ENCODE measurements at regions of chr6 and their contacts with region 1.

Region 1: DNA sequence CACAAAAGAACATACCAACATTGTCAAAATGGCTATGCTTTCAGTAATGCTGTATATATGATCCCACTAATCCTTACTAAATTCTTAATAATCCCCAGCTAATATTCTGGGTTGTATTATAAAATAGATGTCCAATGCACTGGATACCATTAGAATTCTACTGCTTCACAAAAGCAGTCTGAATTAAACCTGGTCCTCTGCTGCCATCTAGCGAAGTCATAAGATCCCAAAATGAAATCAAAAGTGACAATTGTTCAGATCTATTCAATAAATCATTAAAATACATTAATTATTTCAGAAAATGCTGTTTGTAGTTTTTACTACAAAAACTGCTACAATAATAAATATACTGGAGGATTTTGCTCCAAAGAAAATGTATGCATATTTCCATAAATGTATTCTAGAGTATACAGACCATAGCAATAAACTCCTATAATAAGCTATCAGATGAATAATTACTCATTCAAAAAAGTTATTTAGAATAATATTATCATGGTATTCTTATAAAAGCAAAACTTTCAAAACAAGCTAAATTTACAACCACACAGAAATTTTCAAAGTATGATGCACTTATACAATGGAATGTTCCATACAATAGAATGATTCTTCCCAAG is 92.6 kb downstream of the RNGTT start:
- DNase-seq: peak; percentile 72
- ATAC-seq: no peak
- H3K4me3 ChIP-seq: no peak overlapping the region
- H3K4me3 Mint-ChIP-seq: no peak overlapping the region
- H3K27ac ChIP-seq: no peak overlapping the region
- H3K27ac Mint-ChIP-seq: no peak overlapping the region
- H3K4me1 ChIP-seq: peaks cover 0 to 4% of the 10 kb centered on the region in 2 donors
- H3K4me1 Mint-ChIP-seq: peaks cover 5% of the 10 kb centered on the region
- H3K27me3 ChIP-seq: no peaks in the 10 kb centered on the region
- H3K27me3 Mint-ChIP-seq: no peaks in the 10 kb centered on the region
- CTCF ChIP-seq: peak; percentile 94

Region 2: DNA sequence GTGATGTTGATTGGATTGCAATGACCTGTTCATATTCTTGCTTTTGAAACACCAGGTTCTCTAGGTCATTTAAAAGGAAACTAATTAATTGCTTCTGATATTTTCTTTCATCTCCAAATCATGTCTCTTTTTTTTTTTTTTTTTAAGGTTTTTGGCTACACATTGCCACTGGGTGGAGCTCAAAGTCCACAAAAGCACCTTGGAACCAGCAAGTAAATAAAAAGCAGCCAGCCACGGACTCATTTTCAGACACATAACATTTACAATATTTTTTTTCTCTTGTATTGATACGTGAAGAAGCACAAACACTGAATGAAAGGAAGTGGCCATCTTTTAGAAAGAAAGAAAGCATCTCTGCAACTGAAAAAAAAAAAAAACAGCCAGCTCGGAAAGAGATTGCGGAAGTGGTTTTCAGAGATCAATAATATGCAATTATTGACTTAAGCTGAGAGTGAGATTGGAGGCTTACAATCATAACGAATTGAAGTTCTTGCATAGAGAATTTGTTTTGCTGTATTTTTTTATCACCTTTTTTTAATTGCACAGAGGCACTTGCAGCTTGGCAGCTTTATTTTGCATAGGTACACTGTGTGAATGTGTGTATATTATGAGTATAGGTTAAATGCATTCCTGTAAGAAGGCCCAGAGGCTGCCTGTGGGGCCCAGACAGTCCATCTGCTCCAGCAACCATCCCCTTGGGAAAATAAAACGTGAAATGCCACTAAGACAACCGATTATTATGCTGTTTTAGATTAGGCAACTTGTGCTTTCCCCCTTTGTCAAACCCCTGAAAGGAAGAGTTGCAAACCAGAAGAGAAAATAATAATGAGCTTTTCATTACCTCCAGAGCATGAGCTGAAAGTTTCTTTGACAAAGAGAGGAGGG is 1804.1 kb before region 1 on chr6:
- CTCF ChIA-PET with region 1: interaction called, 32 read pairs
- POLR2A ChIA-PET with region 1: no interaction called
- intact Hi-C with region 1: loop called (anchors 1 kb)
- DNase-seq: peak; percentile 67
- ATAC-seq: no peak
- H3K4me3 ChIP-seq: peak overlapping the region in 2 of 5 experiments; percentile 29 to 33
- H3K4me3 Mint-ChIP-seq: peak overlapping the region; percentile 44
- H3K27ac ChIP-seq: no peak overlapping the region
- H3K27ac Mint-ChIP-seq: no peak overlapping the region
- H3K4me1 ChIP-seq: no peaks in the 10 kb centered on the region
- H3K4me1 Mint-ChIP-seq: peaks cover 5% of the 10 kb centered on the region
- H3K27me3 ChIP-seq: no peaks in the 10 kb centered on the region
- H3K27me3 Mint-ChIP-seq: no peaks in the 10 kb centered on the region
- CTCF ChIP-seq: peak; percentile 78

Region 3: GRCh38 chr6:87237804-87238203 is 1633.0 kb before region 1 on chr6:
- CTCF ChIA-PET with region 1: no interaction called
- POLR2A ChIA-PET with region 1: no interaction called
- intact Hi-C with region 1: loop called (anchors 10 kb)
- DNase-seq: peak; percentile 39
- ATAC-seq: peak; percentile 49
- H3K4me3 ChIP-seq: no peak overlapping the region
- H3K4me3 Mint-ChIP-seq: no peak overlapping the region
- H3K27ac ChIP-seq: no peak overlapping the region
- H3K27ac Mint-ChIP-seq: no peak overlapping the region
- H3K4me1 ChIP-seq: no peaks in the 10 kb centered on the region
- H3K4me1 Mint-ChIP-seq: peaks cover 3% of the 10 kb centered on the region
- H3K27me3 ChIP-seq: no peaks in the 10 kb centered on the region
- H3K27me3 Mint-ChIP-seq: no peaks in the 10 kb centered on the region
- CTCF ChIP-seq: peak; percentile 52

Region 4: GRCh38 chr6:87393022-87393622 is 1477.7 kb before region 1 on chr6:
- CTCF ChIA-PET with region 1: interaction called, 46 read pairs
- POLR2A ChIA-PET with region 1: no interaction called
- intact Hi-C with region 1: loop called (anchors 1 kb)
- DNase-seq: peak; percentile 79
- ATAC-seq: peak; percentile 86
- H3K4me3 ChIP-seq: no peak overlapping the region
- H3K4me3 Mint-ChIP-seq: no peak overlapping the region
- H3K27ac ChIP-seq: no peak overlapping the region
- H3K27ac Mint-ChIP-seq: no peak overlapping the region
- H3K4me1 ChIP-seq: no peaks in the 10 kb centered on the region
- H3K4me1 Mint-ChIP-seq: peaks cover 5% of the 10 kb centered on the region
- H3K27me3 ChIP-seq: no peaks in the 10 kb centered on the region
- H3K27me3 Mint-ChIP-seq: no peaks in the 10 kb centered on the region
- CTCF ChIP-seq: peak; percentile 84

Region 5: DNA sequence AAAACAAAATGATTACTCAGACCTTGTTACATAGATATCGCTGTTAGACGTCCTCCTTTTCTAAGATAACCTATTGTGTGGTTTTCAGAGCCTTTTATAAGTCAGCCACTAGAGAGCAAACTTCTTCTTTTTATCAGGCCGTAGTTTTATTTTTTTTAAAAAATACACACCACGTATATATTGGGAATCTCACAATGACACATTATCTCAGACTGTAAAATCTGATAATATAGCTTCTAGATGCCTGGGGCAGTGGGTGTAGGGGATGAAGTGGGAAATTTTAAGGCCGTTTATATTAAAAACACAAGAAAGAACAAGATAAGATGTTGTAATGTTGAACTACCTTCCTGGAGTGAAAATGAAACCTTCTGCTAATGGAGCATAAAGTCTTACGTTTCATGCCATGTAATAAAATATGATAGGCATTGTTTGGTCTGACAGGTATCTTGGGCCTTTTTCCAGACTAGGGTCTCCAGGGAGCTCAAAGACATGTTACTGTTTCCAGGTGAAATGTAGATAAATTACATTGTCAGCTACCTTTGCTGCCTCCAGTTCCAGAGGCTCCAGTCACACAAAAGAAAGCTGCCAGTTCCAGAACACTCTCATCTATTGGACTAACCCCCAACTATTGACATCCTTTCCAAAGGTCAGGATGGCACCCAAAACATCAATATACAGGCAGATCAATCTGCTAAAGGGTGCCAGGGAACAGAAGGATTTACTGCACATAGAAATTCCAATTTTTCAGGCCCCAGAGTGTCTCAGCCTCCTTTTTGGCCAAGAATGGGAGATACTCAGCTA is 1038.6 kb before region 1 on chr6:
- CTCF ChIA-PET with region 1: interaction called, 29 read pairs
- POLR2A ChIA-PET with region 1: no interaction called
- intact Hi-C with region 1: loop called (anchors 1 kb)
- DNase-seq: peak; percentile 73
- ATAC-seq: peak; percentile 74
- H3K4me3 ChIP-seq: peak overlapping the region; percentile 42 to 81 (median 64)
- H3K4me3 Mint-ChIP-seq: peak overlapping the region; percentile 89
- H3K27ac ChIP-seq: peak overlapping the region; percentile 74 to 89
- H3K27ac Mint-ChIP-seq: peak overlapping the region; percentile 78
- H3K4me1 ChIP-seq: peaks cover 6 to 7% of the 10 kb centered on the region in 2 donors
- H3K4me1 Mint-ChIP-seq: peaks cover 14% of the 10 kb centered on the region
- H3K27me3 ChIP-seq: no peaks in the 10 kb centered on the region
- H3K27me3 Mint-ChIP-seq: no peaks in the 10 kb centered on the region
- CTCF ChIP-seq: peak; percentile 76

Region 6: GRCh38 chr6:88629838-88630494 is 240.9 kb before region 1 on chr6:
- CTCF ChIA-PET with region 1: no interaction called
- POLR2A ChIA-PET with region 1: no interaction called
- intact Hi-C with region 1: no loop called
- DNase-seq: peak; percentile 59
- ATAC-seq: peak; percentile 33
- H3K4me3 ChIP-seq: no peak overlapping the region
- H3K4me3 Mint-ChIP-seq: no peak overlapping the region
- H3K27ac ChIP-seq: no peak overlapping the region
- H3K27ac Mint-ChIP-seq: peak overlapping the region; percentile 17
- H3K4me1 ChIP-seq: peaks cover 25 to 30% of the 10 kb centered on the region in 2 donors
- H3K4me1 Mint-ChIP-seq: peaks cover 45% of the 10 kb centered on the region
- H3K27me3 ChIP-seq: no peaks in the 10 kb centered on the region
- H3K27me3 Mint-ChIP-seq: no peaks in the 10 kb centered on the region
- CTCF ChIP-seq: peak; percentile 18

Region 7: DNA sequence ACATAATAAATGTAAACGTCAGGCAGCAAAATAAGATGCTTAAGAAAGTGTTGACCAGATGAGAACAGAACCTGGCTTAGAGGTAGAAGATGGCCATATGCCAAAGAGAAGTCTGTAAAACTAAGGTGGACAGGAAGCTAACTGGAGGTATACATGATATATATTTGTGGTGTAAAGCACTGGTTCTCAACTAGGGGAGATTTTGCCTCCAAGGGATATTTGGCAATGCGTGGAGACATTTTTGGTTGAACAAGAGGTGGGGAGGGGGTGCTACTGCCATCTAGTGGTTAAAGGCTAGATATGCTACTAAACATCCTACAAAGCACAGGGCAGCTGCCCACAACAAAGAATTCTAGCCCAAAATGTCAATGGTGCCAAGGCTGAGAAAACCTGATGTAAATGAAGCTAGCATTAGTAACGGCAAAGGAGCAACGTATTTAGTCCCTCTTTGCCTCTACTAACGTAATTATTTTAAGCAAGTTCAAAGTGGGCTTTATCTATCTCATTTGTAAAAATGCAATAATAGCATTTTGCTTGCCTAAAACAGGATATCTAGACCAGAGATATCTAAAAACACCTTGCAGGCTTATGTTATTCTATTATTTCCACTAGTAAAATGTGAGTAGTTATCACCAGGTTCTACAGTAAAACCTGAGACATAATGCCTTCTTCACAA is 90.0 kb before region 1 on chr6:
- CTCF ChIA-PET with region 1: no interaction called
- POLR2A ChIA-PET with region 1: no interaction called
- intact Hi-C with region 1: no loop called
- DNase-seq: peak; percentile 82
- ATAC-seq: peak; percentile 81
- H3K4me3 ChIP-seq: no peak overlapping the region
- H3K4me3 Mint-ChIP-seq: no peak overlapping the region
- H3K27ac ChIP-seq: no peak overlapping the region
- H3K27ac Mint-ChIP-seq: no peak overlapping the region
- H3K4me1 ChIP-seq: peaks cover 0 to 13% of the 10 kb centered on the region in 2 donors
- H3K4me1 Mint-ChIP-seq: peaks cover 16% of the 10 kb centered on the region
- H3K27me3 ChIP-seq: no peaks in the 10 kb centered on the region
- H3K27me3 Mint-ChIP-seq: no peaks in the 10 kb centered on the region
- CTCF ChIP-seq: peak; percentile 90

Region 8: GRCh38 chr6:88856566-88856965 is 14.3 kb before region 1 on chr6:
- CTCF ChIA-PET with region 1: interaction called, 21 read pairs
- POLR2A ChIA-PET with region 1: no interaction called
- intact Hi-C with region 1: no loop called
- DNase-seq: no peak
- ATAC-seq: no peak
- H3K4me3 ChIP-seq: no peak overlapping the region
- H3K4me3 Mint-ChIP-seq: no peak overlapping the region
- H3K27ac ChIP-seq: no peak overlapping the region
- H3K27ac Mint-ChIP-seq: no peak overlapping the region
- H3K4me1 ChIP-seq: no peaks in the 10 kb centered on the region
- H3K4me1 Mint-ChIP-seq: no peaks in the 10 kb centered on the region
- H3K27me3 ChIP-seq: no peaks in the 10 kb centered on the region
- H3K27me3 Mint-ChIP-seq: no peaks in the 10 kb centered on the region
- CTCF ChIP-seq: no peak

Measured in B cell (primary cell).